Caco-2 (cell line): ENCODE measurements at regions of chr12 and their contacts with region 1.

Region 1: DNA sequence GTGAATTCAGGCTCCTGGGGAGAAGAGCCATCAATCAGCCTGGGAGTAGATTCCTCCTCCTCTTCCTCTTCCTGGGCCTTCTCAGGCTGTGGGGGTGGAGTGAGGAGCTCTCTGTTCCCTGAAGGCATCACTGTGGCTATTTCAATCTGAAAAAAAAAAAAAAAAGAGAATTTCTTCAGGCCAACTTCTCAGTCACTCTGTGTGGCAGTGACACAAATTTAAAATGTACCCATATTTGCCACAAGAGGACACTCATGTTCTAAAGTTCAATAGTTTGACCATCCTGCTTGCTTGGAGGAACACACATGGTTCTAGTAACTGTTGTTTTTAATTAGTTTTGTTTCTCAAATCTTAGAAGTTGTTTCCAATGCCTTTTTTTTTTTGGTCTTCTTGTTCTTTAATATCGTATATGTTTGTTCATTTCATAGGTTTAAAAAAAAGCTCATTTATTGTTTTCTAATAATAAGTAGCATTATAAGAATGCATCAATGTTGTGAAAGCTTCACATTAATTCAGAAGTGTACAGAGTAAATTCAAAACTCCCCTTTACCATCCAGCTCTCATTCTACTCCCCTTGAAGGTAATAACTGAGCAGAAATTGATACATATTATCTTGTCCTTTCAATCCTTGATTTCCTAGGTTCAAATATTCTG is 23.3 kb upstream of the CCER1 start:
- DNase-seq: peak in 1 of 2 experiments; percentile 39
- H3K4me3 ChIP-seq: no peak overlapping the region
- H3K4me3 Mint-ChIP-seq: no peak overlapping the region
- H3K27ac Mint-ChIP-seq: no peak overlapping the region
- H3K4me1 ChIP-seq: no peaks in the 10 kb centered on the region
- H3K4me1 Mint-ChIP-seq: no peaks in the 10 kb centered on the region
- H3K27me3 ChIP-seq: no peaks in the 10 kb centered on the region
- H3K27me3 Mint-ChIP-seq: no peaks in the 10 kb centered on the region
- CTCF ChIP-seq: peak; percentile 71 to 73

Region 2: GRCh38 chr12:90936230-90937005 is 41.8 kb before region 1 on chr12:
- CTCF ChIA-PET with region 1: no interaction called
- POLR2A ChIA-PET with region 1: no interaction called
- intact Hi-C with region 1: no loop called
- DNase-seq: no peak
- H3K4me3 ChIP-seq: no peak overlapping the region
- H3K4me3 Mint-ChIP-seq: no peak overlapping the region
- H3K27ac Mint-ChIP-seq: no peak overlapping the region
- H3K4me1 ChIP-seq: peaks cover 4% of the 10 kb centered on the region; the same call in 1 of the 2 replicates
- H3K4me1 Mint-ChIP-seq: no peaks in the 10 kb centered on the region
- H3K27me3 ChIP-seq: no peaks in the 10 kb centered on the region
- H3K27me3 Mint-ChIP-seq: no peaks in the 10 kb centered on the region
- CTCF ChIP-seq: no peak

Region 3: GRCh38 chr12:91109148-91109564 is 130.9 kb after region 1 on chr12:
- CTCF ChIA-PET with region 1: interaction called, 3 read pairs
- POLR2A ChIA-PET with region 1: no interaction called
- intact Hi-C with region 1: loop called (anchors 1 kb)
- DNase-seq: peak; percentile 47 to 74
- H3K4me3 ChIP-seq: no peak overlapping the region
- H3K4me3 Mint-ChIP-seq: no peak overlapping the region
- H3K27ac Mint-ChIP-seq: no peak overlapping the region
- H3K4me1 ChIP-seq: peaks cover 6% of the 10 kb centered on the region; the same call in 1 of the 2 replicates
- H3K4me1 Mint-ChIP-seq: peaks cover 6% of the 10 kb centered on the region
- H3K27me3 ChIP-seq: no peaks in the 10 kb centered on the region
- H3K27me3 Mint-ChIP-seq: no peaks in the 10 kb centered on the region
- CTCF ChIP-seq: peak; percentile 62 to 65

Region 4: DNA sequence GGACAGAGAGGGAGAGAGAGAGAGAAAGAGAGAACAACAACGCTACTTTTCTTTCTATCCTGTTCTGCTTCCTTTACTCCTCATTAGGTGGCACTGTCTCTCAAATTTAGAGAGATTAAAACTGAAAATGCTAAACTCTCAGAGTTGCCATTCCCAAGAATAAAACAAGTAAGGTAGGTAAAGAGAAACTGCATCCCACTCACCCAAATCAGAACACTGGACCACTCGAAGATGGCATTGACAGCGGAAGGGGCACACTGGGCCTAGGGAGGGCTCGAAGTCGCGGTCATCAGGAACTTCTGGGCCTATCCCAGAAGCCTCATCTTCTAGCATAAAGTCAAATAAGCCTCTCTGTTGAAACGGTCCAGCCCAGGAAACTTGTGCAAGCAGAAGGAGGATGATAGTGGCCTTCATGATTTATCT is 199.9 kb after region 1 on chr12:
- CTCF ChIA-PET with region 1: no interaction called
- POLR2A ChIA-PET with region 1: no interaction called
- intact Hi-C with region 1: loop called (anchors 5 kb)
- DNase-seq: no peak
- H3K4me3 ChIP-seq: no peak overlapping the region
- H3K4me3 Mint-ChIP-seq: no peak overlapping the region
- H3K27ac Mint-ChIP-seq: no peak overlapping the region
- H3K4me1 ChIP-seq: no peaks in the 10 kb centered on the region
- H3K4me1 Mint-ChIP-seq: no peaks in the 10 kb centered on the region
- H3K27me3 ChIP-seq: no peaks in the 10 kb centered on the region
- H3K27me3 Mint-ChIP-seq: no peaks in the 10 kb centered on the region
- CTCF ChIP-seq: peak; percentile 22 to 33

Region 5: DNA sequence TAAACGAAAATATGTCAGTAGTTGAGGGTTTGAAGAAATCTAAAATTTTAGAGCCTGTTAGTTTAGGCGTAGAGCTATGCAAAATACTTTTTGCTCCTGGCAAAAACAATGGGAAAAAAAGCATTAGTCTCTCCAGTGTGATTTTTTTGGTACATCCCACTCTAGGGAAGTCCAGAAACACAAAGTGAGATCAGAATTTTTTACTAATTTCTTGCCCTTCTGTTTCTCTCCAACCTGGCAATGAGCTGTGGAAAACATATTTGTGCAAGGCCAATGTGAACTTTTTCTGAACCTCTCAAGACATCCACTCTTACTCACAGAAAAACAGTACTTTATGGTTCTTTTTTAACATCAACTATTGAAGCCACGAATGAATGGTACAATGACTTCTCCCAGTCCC is 261.2 kb after region 1 on chr12:
- CTCF ChIA-PET with region 1: interaction called, 5 read pairs
- POLR2A ChIA-PET with region 1: no interaction called
- intact Hi-C with region 1: loop called (anchors 1 kb)
- DNase-seq: no peak
- H3K4me3 ChIP-seq: no peak overlapping the region
- H3K4me3 Mint-ChIP-seq: no peak overlapping the region
- H3K27ac Mint-ChIP-seq: no peak overlapping the region
- H3K4me1 ChIP-seq: no peaks in the 10 kb centered on the region
- H3K4me1 Mint-ChIP-seq: no peaks in the 10 kb centered on the region
- H3K27me3 ChIP-seq: no peaks in the 10 kb centered on the region
- H3K27me3 Mint-ChIP-seq: peaks cover 6% of the 10 kb centered on the region
- CTCF ChIP-seq: no peak

Region 6: DNA sequence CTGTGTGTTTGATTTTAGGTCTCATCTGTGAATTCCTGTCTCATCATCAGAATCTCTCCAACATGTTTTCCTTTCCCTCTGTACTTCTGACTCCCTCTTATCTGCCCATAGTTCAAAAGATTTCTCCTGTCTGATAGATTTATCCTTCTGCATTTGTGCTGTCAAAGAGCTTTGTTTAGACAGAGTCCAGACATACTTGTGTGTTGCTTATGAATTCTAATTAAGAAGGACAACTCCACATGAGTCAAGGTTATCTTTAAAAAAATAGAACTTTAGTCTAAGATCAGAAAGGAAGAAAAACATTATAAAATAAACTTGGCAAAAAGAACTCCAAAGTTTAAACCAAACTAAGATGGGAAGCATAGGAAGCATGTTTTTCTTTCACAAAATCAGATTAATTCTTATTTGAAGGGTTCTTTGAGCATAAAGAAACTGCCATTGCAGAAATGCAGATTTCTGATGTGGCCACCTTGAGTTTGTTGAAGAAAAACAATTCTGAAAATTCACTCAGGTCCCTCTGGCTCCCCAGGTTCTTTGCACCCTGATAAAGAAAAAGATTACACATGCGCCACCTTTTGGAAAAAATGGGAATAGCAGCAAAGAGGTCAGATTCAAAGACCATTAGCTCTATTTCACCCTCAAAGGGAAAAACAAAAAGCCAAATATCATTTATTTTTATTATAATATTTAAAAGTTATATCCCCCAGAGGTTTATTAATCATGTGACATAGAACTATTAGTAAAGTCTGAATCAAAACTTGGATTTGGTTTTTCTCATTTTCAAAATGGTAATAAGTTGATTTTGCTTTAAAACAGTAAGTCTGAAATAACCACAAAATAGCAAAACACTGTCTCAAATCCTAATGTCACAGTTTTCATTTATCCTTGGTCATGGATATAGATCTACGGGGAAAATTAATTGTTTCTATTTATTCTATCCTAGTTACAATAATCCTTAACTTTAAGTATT is 348.1 kb after region 1 on chr12:
- CTCF ChIA-PET with region 1: interaction called, 3 read pairs
- POLR2A ChIA-PET with region 1: no interaction called
- intact Hi-C with region 1: loop called (anchors 1 kb)
- DNase-seq: peak; percentile 38 to 64
- H3K4me3 ChIP-seq: no peak overlapping the region
- H3K4me3 Mint-ChIP-seq: no peak overlapping the region
- H3K27ac Mint-ChIP-seq: no peak overlapping the region
- H3K4me1 ChIP-seq: no peaks in the 10 kb centered on the region
- H3K4me1 Mint-ChIP-seq: no peaks in the 10 kb centered on the region
- H3K27me3 ChIP-seq: no peaks in the 10 kb centered on the region
- H3K27me3 Mint-ChIP-seq: no peaks in the 10 kb centered on the region
- CTCF ChIP-seq: peak; percentile 62 to 65

Region 7: GRCh38 chr12:91355150-91356006 is 377.1 kb after region 1 on chr12:
- CTCF ChIA-PET with region 1: no interaction called
- POLR2A ChIA-PET with region 1: no interaction called
- intact Hi-C with region 1: loop called (anchors 1 kb)
- DNase-seq: peak; percentile 58 to 70
- H3K4me3 ChIP-seq: no peak overlapping the region
- H3K4me3 Mint-ChIP-seq: no peak overlapping the region
- H3K27ac Mint-ChIP-seq: no peak overlapping the region
- H3K4me1 ChIP-seq: peaks cover 16% of the 10 kb centered on the region
- H3K4me1 Mint-ChIP-seq: peaks cover 8% of the 10 kb centered on the region
- H3K27me3 ChIP-seq: no peaks in the 10 kb centered on the region
- H3K27me3 Mint-ChIP-seq: no peaks in the 10 kb centered on the region
- CTCF ChIP-seq: peak; percentile 66 to 83

Region 8: GRCh38 chr12:91367234-91367849 is 389.1 kb after region 1 on chr12:
- CTCF ChIA-PET with region 1: no interaction called
- POLR2A ChIA-PET with region 1: no interaction called
- intact Hi-C with region 1: loop called (anchors 1 kb)
- DNase-seq: peak in 1 of 2 experiments; percentile 6
- H3K4me3 ChIP-seq: no peak overlapping the region
- H3K4me3 Mint-ChIP-seq: no peak overlapping the region
- H3K27ac Mint-ChIP-seq: no peak overlapping the region
- H3K4me1 ChIP-seq: no peaks in the 10 kb centered on the region
- H3K4me1 Mint-ChIP-seq: no peaks in the 10 kb centered on the region
- H3K27me3 ChIP-seq: no peaks in the 10 kb centered on the region
- H3K27me3 Mint-ChIP-seq: peaks cover 6% of the 10 kb centered on the region
- CTCF ChIP-seq: peak; percentile 42 to 53